Adrenal gland (tissue), 19 donors: ENCODE measurements at regions of chr14 and their contacts with region 1.

Region 1: DNA sequence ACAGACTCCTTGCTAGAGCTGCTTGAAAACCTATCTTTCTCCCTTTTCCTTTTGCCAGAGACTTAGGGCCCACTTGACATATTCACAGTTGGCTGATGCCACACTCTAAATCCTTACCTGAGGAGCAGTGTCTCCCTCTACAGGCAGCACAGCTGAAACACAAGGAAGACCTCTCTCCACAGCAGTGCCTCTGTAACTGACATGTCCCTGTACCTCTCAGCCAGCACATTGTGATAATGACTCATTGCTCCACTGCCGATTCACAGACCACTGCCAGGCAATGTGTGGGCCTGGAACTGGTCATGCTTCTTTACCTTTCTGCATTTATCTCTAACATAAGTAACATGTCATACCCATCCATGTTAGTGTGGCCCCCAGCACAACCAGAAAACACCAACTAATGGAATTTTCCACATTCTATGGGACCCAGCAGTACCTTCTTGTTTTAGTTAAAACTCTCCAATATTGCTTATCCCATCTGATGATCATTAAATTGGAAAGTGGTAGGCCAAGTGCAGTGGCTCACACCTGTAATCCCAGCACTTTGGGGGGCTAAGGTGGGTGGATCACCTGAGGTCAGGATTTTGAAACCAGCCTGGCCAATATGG is 56.5 kb downstream of the GTF2A1 start:
- DNase-seq: peak; percentile 70 to 93 (median 86)
- H3K4me3 ChIP-seq: no peak overlapping the region
- H3K27ac ChIP-seq: peak overlapping the region in 2 of 5 donors; percentile 6 to 9
- H3K4me1 ChIP-seq: peaks cover 0 to 14% of the 10 kb centered on the region in 2 donors
- H3K27me3 ChIP-seq: no peaks in the 10 kb centered on the region
- CTCF ChIP-seq: peak; percentile 51 to 82 (median 78)
- POLR2A ChIP-seq: peak in 1 of 2 donors; percentile 7

Region 2: DNA sequence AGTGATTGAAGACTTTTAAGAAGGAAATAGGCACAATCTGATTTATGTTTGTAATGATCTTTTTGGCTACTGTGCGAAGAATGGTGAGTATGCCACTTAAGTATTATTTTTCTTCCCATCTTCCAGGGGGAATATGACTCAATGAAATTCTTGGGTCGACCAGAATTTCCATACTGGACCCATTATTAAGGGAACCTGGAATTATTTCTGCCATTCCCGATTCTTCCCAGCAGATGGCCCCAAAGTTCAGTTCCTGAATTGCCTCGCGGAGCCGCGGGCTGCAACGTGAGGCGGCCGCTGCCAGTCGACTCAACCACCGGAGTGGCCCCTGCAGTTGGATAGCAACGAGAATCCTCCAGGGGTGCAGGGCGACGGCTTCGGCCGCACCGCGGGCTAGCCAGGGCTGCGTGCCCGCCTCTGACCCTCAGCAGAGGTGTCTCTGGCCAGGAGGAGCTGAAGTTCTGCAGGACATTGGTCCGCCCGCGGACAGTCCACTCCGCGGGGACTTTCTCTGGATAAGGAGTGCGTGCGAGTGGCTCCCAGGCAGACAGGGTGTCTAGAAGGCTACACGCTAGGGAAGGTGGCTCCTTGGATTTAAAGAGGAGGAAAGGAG is 209.5 kb before region 1 on chr14:
- intact Hi-C with region 1: loop called in 1 of 2 experiments (anchors 10 kb)
- DNase-seq: peak; percentile 78 to 93 (median 88)
- H3K4me3 ChIP-seq: peak overlapping the region in 3 of 4 donors; percentile 33 to 63 (median 54)
- H3K27ac ChIP-seq: no peak overlapping the region
- H3K4me1 ChIP-seq: peaks cover 3 to 12% of the 10 kb centered on the region in 2 donors
- H3K27me3 ChIP-seq: no peaks in the 10 kb centered on the region
- CTCF ChIP-seq: peak; percentile 56 to 91 (median 86)
- POLR2A ChIP-seq: no peak

Region 3: DNA sequence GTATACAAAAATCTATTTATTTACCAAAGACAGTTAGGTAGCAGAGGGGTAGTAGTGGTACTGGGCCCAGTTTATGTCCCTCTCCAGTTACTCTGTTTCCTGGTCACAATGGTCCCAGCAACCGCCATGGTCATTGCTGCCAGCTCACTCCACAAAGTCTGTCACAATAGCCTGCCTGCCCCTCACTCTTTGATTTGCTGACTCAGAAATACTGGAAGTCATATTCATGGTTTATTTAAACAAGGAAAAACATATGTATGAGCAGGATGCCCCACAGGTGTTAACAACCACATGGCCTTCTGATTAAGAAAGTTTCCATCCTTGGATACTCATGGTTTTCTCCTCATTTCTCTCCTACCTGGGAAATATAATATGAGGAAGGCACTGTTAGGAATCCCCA is 159.7 kb before region 1 on chr14:
- intact Hi-C with region 1: loop called in 1 of 2 experiments (anchors 5 kb)
- DNase-seq: no peak
- H3K4me3 ChIP-seq: no peak overlapping the region
- H3K27ac ChIP-seq: no peak overlapping the region
- H3K4me1 ChIP-seq: no peaks in the 10 kb centered on the region
- H3K27me3 ChIP-seq: no peaks in the 10 kb centered on the region
- CTCF ChIP-seq: no peak
- POLR2A ChIP-seq: no peak

Region 4: GRCh38 chr14:81236138-81236537 is 71.9 kb after region 1 on chr14:
- intact Hi-C with region 1: no loop called
- DNase-seq: no peak
- H3K4me3 ChIP-seq: no peak overlapping the region
- H3K27ac ChIP-seq: no peak overlapping the region
- H3K4me1 ChIP-seq: no peaks in the 10 kb centered on the region
- H3K27me3 ChIP-seq: no peaks in the 10 kb centered on the region
- CTCF ChIP-seq: no peak
- POLR2A ChIP-seq: no peak